ENCODE measurements at regions of chr12 and their contacts with region 1.

Region 1: DNA sequence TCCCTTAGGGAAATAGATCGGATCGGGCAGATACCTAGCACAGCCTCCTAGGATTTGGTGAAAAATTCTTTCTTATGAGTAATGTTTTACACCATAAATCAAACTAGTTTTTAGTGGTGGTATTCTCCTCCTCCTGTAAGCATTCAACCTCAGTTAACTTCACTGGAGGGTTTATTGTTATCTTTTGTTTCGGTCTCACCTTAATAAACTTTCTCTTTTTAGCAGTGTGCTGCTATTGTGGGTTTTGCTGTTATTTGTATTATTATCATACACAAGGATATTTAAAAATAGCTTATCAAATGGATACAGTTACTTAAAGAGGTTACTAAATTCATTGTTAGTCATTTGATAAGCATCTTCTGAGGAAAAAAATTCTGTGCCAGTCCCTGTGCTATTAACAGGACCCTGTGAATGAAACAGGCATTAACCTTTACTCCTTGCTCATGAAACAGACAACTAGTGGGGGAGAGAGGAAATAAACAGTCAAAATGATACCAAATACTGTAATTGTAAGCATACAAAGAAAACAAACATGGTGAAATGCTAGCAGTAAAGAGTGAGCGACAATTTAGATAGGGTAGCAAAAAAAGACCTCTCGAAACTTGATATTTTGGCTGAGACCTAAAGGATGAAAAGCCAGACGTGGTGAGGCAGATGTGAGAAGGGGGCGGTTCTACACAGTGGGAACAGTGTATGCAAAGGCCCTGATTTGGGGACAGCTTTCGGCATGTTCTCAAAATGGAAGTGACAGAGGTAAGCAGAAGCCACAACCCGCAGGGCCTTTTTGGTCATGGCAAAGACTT is 178.7 kb upstream of the SOX5 start:
- DNase-seq: no peak
- H3K4me3 ChIP-seq: no peak overlapping the region
- H3K27ac ChIP-seq: no peak overlapping the region
- H3K4me1 ChIP-seq: no peaks in the 10 kb centered on the region
- H3K27me3 ChIP-seq: no peaks in the 10 kb centered on the region
- CTCF ChIP-seq: no peak
- POLR2A ChIP-seq: no peak

Region 2: GRCh38 chr12:24596768-24597388 is 468.8 kb after region 1 on chr12:
- intact Hi-C with region 1: loop called (anchors 10 kb)
- DNase-seq: no peak
- H3K4me3 ChIP-seq: no peak overlapping the region
- H3K27ac ChIP-seq: no peak overlapping the region
- H3K4me1 ChIP-seq: no peaks in the 10 kb centered on the region
- H3K27me3 ChIP-seq: no peaks in the 10 kb centered on the region
- CTCF ChIP-seq: peak; percentile 26 to 71 (median 67)
- POLR2A ChIP-seq: no peak